ENCODE measurements at regions of chr12 and their contacts with region 1.

Region 1: GRCh38 chr12:949453-950191 is at the start of gene RAD52:
- H3K4me3 Mint-ChIP-seq: peak within 1 kb of the TSS; percentile 97
- H3K27ac Mint-ChIP-seq: peak within 1 kb of the TSS; percentile 97
- H3K4me1 Mint-ChIP-seq: peaks cover 30% of the 10 kb centered on the region
- H3K27me3 Mint-ChIP-seq: no peaks in the 10 kb centered on the region

Region 2: DNA sequence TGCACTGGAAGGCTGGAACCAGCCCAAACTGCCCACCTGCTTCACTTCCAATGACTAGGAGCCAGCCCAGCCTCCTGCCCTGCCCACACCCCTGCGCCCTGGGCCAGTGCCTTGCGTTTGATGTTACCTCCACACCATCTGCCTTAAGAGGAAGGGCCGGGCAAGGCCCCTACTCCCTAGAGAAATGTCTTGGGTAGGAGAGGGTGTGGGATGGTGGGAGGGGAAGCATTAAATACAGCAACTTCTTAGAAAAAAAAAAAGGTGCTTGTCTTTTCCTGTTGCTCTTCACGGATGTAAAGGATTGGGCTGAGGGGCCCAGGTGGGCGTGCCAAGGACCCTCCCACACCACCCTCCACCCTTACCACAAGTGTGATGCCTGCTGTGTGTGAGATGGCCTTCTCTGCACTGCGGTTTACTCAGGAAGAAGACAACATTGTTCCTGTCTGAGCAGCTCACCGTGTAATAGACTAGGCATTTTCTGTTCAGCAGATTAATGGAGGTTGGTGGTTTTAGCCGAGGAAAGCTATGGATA is 386.3 kb before region 1 on chr12:
- intact Hi-C with region 1: loop called (anchors 5 kb)
- H3K4me3 Mint-ChIP-seq: peak overlapping the region; percentile 89
- H3K27ac Mint-ChIP-seq: peak overlapping the region; percentile 95
- H3K4me1 Mint-ChIP-seq: peaks cover 74% of the 10 kb centered on the region
- H3K27me3 Mint-ChIP-seq: peaks cover 11% of the 10 kb centered on the region

Region 3: GRCh38 chr12:913919-914708 is 35.5 kb before region 1 on chr12:
- intact Hi-C with region 1: loop called (anchors 5 kb)
- H3K4me3 Mint-ChIP-seq: peak overlapping the region; percentile 39
- H3K27ac Mint-ChIP-seq: peak overlapping the region; percentile 70
- H3K4me1 Mint-ChIP-seq: peaks cover 35% of the 10 kb centered on the region
- H3K27me3 Mint-ChIP-seq: no peaks in the 10 kb centered on the region

Region 4: DNA sequence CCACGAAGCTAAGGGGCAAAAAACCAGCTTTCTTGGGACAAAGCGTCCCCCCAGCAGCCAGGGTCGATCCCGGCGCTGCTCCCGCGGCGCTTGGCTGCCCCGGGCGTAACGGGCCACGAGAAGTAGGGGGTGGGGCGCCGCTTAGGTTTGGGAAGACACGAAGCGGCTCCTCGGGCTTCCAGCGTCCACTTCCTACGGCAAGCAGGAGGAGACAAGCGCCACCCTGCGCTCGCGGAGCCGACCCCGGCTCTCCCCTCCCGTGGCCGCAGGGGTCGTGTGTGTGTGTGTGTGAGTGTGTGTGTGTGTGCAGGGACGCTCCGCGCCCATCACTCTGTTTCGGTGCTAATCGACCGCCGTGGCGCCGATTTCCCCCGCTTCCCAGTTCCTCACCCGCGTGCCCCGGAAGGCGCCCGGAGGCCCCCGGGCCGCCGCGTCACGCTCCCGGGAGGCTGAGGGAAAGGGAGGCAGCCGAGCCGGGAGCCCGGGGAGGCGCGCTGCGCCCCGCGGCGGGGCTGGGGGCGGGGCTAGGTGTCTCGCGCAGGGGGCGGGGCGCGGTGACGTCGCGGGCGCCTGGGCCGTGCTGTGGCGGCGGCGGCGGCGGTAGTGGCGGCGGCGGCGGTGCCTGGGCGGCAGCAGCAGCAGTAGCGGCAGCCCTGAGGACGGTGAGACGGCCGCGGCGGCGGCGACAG is 41.2 kb after region 1 on chr12 and contains the start of gene ERC1:
- intact Hi-C with region 1: loop called (anchors 1 kb)
- H3K4me3 Mint-ChIP-seq: peak within 1 kb of the TSS; percentile 96
- H3K27ac Mint-ChIP-seq: peak within 1 kb of the TSS; percentile 91
- H3K4me1 Mint-ChIP-seq: peaks cover 57% of the 10 kb centered on the region
- H3K27me3 Mint-ChIP-seq: no peaks in the 10 kb centered on the region

Region 5: DNA sequence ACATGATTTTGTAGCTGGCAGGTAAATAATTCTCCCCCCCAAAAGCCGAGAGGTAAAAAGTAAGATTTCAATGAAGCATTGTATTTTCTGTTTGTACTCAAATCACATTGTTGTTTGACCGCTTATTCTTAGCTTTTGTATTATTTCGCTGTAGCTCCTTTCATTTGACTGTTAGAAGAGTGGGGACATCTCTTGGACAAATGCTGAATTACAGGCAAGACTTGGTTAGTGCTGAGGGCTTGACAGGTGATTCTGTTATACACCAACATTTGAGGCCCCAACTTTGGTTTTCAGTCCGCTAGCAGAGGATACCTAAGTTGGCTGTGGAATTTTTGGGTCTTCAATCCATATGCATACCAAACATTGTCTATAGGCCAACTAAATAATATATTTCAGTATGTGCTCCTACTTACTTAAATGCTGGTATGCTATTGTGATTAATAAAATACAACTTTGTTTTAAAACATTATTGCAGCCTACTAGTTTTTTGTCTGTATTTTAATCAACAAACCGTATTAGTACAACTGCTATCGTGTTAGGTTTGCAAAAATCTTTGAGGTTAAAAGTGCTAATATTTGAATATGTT is 143.6 kb after region 1 on chr12:
- intact Hi-C with region 1: loop called (anchors 10 kb)
- H3K4me3 Mint-ChIP-seq: no peak overlapping the region
- H3K27ac Mint-ChIP-seq: no peak overlapping the region
- H3K4me1 Mint-ChIP-seq: no peaks in the 10 kb centered on the region
- H3K27me3 Mint-ChIP-seq: no peaks in the 10 kb centered on the region